CD4-positive, alpha-beta T cell (primary cell): ENCODE measurements at regions of chr4 and their contacts with region 1.

Region 1: GRCh38 chr4:2963175-2963965 is at the starts of genes GRK4 and NOP14:
- DNase-seq: peak; percentile 92 to 99 (median 96)
- ATAC-seq: peak; percentile 89
- H3K4me3 ChIP-seq: peak within 1 kb of the TSS; percentile 87
- H3K4me3 Mint-ChIP-seq: peak within 1 kb of the TSS; percentile 92
- H3K27ac ChIP-seq: peak within 1 kb of the TSS; percentile 88 to 92
- H3K27ac Mint-ChIP-seq: peak within 1 kb of the TSS; percentile 84
- H3K4me1 ChIP-seq: peaks cover 34% of the 10 kb centered on the region
- H3K4me1 Mint-ChIP-seq: peaks cover 42% of the 10 kb centered on the region
- H3K27me3 ChIP-seq: no peaks in the 10 kb centered on the region
- H3K27me3 Mint-ChIP-seq: no peaks in the 10 kb centered on the region
- CTCF ChIP-seq: peak; percentile 62
- total RNA-seq, gene GRK4: 1.2 to 1.8 TPM
- total RNA-seq, gene NOP14: 21.8 TPM

Region 2: GRCh38 chr4:1856042-1856788 is 1107.2 kb before region 1 on chr4 and contains the start of gene LETM1:
- CTCF ChIA-PET with region 1: no interaction called
- POLR2A ChIA-PET with region 1: interaction called, 3 read pairs
- intact Hi-C with region 1: loop called in 1 of 2 experiments (anchors 2 kb)
- DNase-seq: peak; percentile 81 to 97 (median 91)
- ATAC-seq: peak; percentile 97
- H3K4me3 ChIP-seq: peak within 1 kb of the TSS; percentile 75
- H3K4me3 Mint-ChIP-seq: peak within 1 kb of the TSS; percentile 94
- H3K27ac ChIP-seq: peak within 1 kb of the TSS in 1 of 2 donors; percentile 5
- H3K27ac Mint-ChIP-seq: peak within 1 kb of the TSS; percentile 76
- H3K4me1 ChIP-seq: peaks cover 32% of the 10 kb centered on the region
- H3K4me1 Mint-ChIP-seq: peaks cover 40% of the 10 kb centered on the region
- H3K27me3 ChIP-seq: no peaks in the 10 kb centered on the region
- H3K27me3 Mint-ChIP-seq: no peaks in the 10 kb centered on the region
- CTCF ChIP-seq: no peak
- total RNA-seq, gene LETM1: 21.2 to 25.2 TPM

Region 3: DNA sequence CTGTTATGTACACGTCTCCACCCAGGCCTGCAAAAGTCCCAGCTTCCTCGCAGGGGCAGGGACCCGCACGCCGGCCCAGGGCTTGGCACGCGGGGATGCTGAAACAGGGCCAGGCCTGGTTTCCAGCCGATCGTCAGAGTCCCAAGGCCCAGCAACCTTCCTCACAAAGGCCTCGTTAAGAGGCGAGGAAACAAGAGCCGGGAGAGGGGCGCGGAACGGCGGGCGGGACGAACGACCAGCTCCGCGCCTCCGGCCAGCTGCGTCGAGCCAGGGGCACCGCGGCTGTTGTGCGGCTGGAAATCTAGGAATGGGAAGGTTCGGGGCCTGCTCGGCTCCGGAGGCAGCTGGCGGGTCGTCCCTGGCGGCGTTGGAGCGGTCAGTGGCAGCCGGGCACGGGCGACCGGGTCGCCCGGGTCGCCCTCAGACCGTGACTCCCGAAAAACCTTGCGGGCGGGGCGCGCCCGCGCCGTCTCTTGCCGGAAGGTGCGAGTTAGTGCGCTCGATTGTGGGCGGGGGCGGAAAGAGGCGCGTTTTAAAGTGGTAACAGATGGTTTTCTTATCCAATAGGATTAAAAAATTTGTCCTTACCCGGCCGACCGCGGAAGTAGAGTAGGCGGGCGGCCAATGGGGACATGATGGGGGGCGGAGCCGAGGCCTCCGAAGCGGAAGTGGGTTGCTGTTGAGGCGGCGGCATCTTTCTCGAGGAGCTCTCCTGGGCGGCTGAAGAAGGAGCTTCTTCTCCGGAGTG is 494.8 kb before region 1 on chr4 and contains the start of gene RNF4:
- CTCF ChIA-PET with region 1: no interaction called
- POLR2A ChIA-PET with region 1: interaction called, 13 read pairs
- intact Hi-C with region 1: no loop called
- DNase-seq: peak; percentile 89 to 98 (median 94)
- ATAC-seq: peak; percentile 84
- H3K4me3 ChIP-seq: peak within 1 kb of the TSS; percentile 98
- H3K4me3 Mint-ChIP-seq: peak within 1 kb of the TSS; percentile 94
- H3K27ac ChIP-seq: peak within 1 kb of the TSS; percentile 96 to 97
- H3K27ac Mint-ChIP-seq: peak within 1 kb of the TSS; percentile 94
- H3K4me1 ChIP-seq: peaks cover 48% of the 10 kb centered on the region
- H3K4me1 Mint-ChIP-seq: peaks cover 48% of the 10 kb centered on the region
- H3K27me3 ChIP-seq: no peaks in the 10 kb centered on the region
- H3K27me3 Mint-ChIP-seq: no peaks in the 10 kb centered on the region
- CTCF ChIP-seq: no peak
- total RNA-seq, gene RNF4: 106 to 109 TPM

Region 4: GRCh38 chr4:2761035-2761923 is 202.1 kb before region 1 on chr4:
- CTCF ChIA-PET with region 1: interaction called, 7 read pairs
- POLR2A ChIA-PET with region 1: interaction called, 3 read pairs
- intact Hi-C with region 1: loop called (anchors 2 kb)
- DNase-seq: peak in 1 of 14 experiments; percentile 24
- ATAC-seq: no peak
- H3K4me3 ChIP-seq: no peak overlapping the region
- H3K4me3 Mint-ChIP-seq: peak overlapping the region; percentile 1
- H3K27ac ChIP-seq: no peak overlapping the region
- H3K27ac Mint-ChIP-seq: no peak overlapping the region
- H3K4me1 ChIP-seq: peaks cover 18% of the 10 kb centered on the region
- H3K4me1 Mint-ChIP-seq: peaks cover 8% of the 10 kb centered on the region
- H3K27me3 ChIP-seq: no peaks in the 10 kb centered on the region
- H3K27me3 Mint-ChIP-seq: no peaks in the 10 kb centered on the region
- CTCF ChIP-seq: no peak

Region 5: GRCh38 chr4:2923141-2923551 is 40.2 kb before region 1 on chr4:
- CTCF ChIA-PET with region 1: no interaction called
- POLR2A ChIA-PET with region 1: interaction called, 7 read pairs
- intact Hi-C with region 1: loop called in 1 of 2 experiments (anchors 5 kb)
- DNase-seq: peak in 1 of 14 experiments; percentile 49
- ATAC-seq: peak; percentile 34
- H3K4me3 ChIP-seq: no peak overlapping the region
- H3K4me3 Mint-ChIP-seq: no peak overlapping the region
- H3K27ac ChIP-seq: peak overlapping the region in 1 of 2 donors; percentile 41
- H3K27ac Mint-ChIP-seq: peak overlapping the region; percentile 81
- H3K4me1 ChIP-seq: peaks cover 22% of the 10 kb centered on the region
- H3K4me1 Mint-ChIP-seq: peaks cover 50% of the 10 kb centered on the region
- H3K27me3 ChIP-seq: no peaks in the 10 kb centered on the region
- H3K27me3 Mint-ChIP-seq: no peaks in the 10 kb centered on the region
- CTCF ChIP-seq: no peak

Region 6: DNA sequence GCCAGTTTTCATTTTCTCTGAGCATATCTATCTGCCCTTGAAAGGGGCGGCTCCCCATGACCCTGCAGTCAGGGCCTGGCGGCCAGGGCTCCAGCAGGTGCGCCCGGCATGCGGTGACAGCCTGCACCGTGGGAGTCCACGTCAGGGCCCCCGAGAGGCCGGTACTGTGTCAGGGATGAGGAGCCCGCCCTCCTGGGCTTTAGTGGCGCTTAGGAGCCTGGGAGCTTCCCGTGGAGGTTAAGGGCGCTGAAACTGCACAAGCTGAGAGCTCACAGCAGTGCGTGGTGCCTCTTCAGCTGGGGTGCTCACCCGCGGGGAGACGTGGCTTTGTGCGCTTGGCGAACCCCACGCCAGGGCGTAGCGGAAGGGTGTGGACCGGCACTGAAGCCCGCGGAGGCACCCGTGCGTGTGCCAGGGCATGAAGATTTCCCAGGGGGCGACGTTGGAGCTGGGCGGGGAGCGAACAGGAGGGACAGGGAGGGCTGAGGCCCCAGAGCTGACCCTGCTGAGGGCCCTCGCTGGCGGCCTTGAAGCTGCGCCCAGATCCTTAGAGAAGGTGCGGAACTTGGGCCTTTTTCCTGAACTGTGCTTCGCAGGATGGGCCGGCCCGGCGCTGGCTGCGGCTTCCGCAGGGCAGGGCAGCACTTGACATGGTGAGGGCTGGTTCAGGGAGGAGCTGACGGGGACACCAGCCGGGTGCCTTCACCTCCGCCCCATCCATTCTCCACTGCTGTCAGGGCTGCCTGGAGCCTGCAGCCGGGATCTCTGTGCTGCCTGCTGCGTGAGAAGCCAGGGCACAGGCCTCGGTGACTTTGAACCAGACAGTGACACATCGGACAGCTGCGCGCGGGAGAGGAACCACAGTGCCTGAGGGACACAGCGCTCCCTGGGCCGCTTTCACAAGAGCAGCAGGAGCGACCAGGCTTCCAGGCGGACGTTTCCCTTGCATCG is 78.1 kb after region 1 on chr4:
- CTCF ChIA-PET with region 1: no interaction called
- POLR2A ChIA-PET with region 1: interaction called, 9 read pairs
- intact Hi-C with region 1: loop called (anchors 5 kb)
- DNase-seq: peak in 11 of 14 experiments; percentile 13 to 79 (median 27)
- ATAC-seq: peak; percentile 37
- H3K4me3 ChIP-seq: peak overlapping the region; percentile 58
- H3K4me3 Mint-ChIP-seq: peak overlapping the region; percentile 90
- H3K27ac ChIP-seq: peak overlapping the region in 1 of 2 donors; percentile 51
- H3K27ac Mint-ChIP-seq: peak overlapping the region; percentile 82
- H3K4me1 ChIP-seq: peaks cover 71% of the 10 kb centered on the region
- H3K4me1 Mint-ChIP-seq: peaks cover 54% of the 10 kb centered on the region
- H3K27me3 ChIP-seq: no peaks in the 10 kb centered on the region
- H3K27me3 Mint-ChIP-seq: peaks cover 12% of the 10 kb centered on the region
- CTCF ChIP-seq: no peak

Region 7: DNA sequence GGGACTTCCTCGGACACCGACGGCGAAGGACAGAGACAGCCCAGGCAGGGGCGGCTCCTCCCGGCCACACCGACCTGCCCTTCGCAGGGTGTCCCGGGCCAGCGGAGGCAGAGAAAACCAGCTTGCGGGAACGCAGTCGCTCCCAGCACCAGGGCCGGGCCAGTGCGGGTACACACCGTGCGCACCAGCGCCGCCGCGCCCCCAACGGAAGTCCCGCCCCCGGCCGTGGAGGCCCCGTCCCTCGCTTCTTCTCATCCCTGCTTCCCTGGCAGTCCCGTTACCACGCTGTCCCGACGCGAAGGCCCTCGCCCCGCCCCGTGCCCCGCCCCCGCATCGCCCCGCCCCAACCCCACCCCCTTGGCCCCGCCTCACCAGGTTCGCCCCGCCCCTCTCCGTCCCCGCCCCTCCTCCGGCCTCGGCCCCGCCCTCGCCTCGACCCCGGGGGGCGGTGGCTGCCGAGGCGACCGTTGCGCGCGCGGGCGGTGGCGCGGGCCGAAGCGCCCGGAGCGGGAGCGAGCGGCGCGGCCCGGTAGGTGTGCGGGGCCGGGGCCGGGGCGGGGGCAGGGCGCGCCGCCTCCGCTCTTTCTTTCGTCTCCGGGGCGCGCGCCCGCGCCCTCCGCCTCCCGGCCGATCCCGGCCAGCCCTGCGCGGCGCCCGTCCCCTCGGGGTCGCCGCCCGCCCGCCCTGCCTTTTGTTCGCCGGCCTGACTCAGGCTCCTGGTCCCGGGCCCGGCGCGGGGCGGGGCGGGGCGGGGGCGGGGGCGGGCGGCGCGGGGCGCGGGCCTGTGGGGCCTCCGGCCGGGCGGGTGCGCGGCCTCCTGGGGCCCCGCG is 329.4 kb after region 1 on chr4 and contains the start of gene RGS12:
- CTCF ChIA-PET with region 1: no interaction called
- POLR2A ChIA-PET with region 1: no interaction called
- intact Hi-C with region 1: loop called in 1 of 2 experiments (anchors 10 kb)
- DNase-seq: peak; percentile 71 to 92 (median 82)
- ATAC-seq: peak; percentile 85
- H3K4me3 ChIP-seq: peak within 1 kb of the TSS; percentile 79
- H3K4me3 Mint-ChIP-seq: peak within 1 kb of the TSS; percentile 95
- H3K27ac ChIP-seq: no peak within 1 kb of the TSS
- H3K27ac Mint-ChIP-seq: peak within 1 kb of the TSS; percentile 78
- H3K4me1 ChIP-seq: peaks cover 29% of the 10 kb centered on the region
- H3K4me1 Mint-ChIP-seq: peaks cover 51% of the 10 kb centered on the region
- H3K27me3 ChIP-seq: peaks cover 0 to 8% of the 10 kb centered on the region in 2 experiments
- H3K27me3 Mint-ChIP-seq: peaks cover 10% of the 10 kb centered on the region
- CTCF ChIP-seq: no peak
- total RNA-seq, gene RGS12: 14.1 to 16.9 TPM